A673 (cell line): ENCODE measurements at regions of chr3 and their contacts with region 1.

Region 1: DNA sequence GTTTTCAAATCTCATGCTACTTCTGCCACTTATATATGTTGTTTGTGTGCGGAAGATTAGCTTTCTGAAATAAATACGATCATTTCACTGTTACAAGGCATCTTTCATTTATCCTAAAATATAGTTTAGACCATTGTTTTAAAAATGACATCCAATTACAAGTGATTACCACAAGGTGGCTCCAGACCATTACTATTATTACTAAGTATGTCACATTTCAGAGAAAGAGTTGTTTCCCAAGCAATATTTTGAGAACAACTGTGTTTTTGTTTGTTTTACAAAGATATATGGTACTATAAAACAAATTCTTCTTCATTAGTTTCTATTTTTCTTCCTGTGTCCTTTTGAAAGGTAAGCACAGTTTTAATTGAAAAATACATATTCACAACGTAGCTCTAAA is 136.0 kb upstream of the RAP2B start:
- DNase-seq: peak; percentile 62
- H3K4me3 ChIP-seq: no peak overlapping the region
- H3K27ac ChIP-seq: no peak overlapping the region
- H3K4me1 ChIP-seq: peaks cover 19% of the 10 kb centered on the region
- H3K27me3 ChIP-seq: no peaks in the 10 kb centered on the region
- CTCF ChIP-seq: peak; percentile 78

Region 2: GRCh38 chr3:153595186-153595815 is 569.3 kb after region 1 on chr3:
- CTCF ChIA-PET with region 1: no interaction called
- POLR2A ChIA-PET with region 1: no interaction called
- intact Hi-C with region 1: loop called (anchors 2 kb)
- DNase-seq: peak; percentile 65
- H3K4me3 ChIP-seq: no peak overlapping the region
- H3K27ac ChIP-seq: no peak overlapping the region
- H3K4me1 ChIP-seq: peaks cover 7% of the 10 kb centered on the region
- H3K27me3 ChIP-seq: peaks cover 10% of the 10 kb centered on the region
- CTCF ChIP-seq: peak; percentile 63

Region 3: GRCh38 chr3:153768561-153769469 is 742.8 kb after region 1 on chr3:
- CTCF ChIA-PET with region 1: no interaction called
- POLR2A ChIA-PET with region 1: no interaction called
- intact Hi-C with region 1: loop called (anchors 2 kb)
- DNase-seq: peak; percentile 75
- H3K4me3 ChIP-seq: no peak overlapping the region
- H3K27ac ChIP-seq: no peak overlapping the region
- H3K4me1 ChIP-seq: no peaks in the 10 kb centered on the region
- H3K27me3 ChIP-seq: no peaks in the 10 kb centered on the region
- CTCF ChIP-seq: peak; percentile 84

Region 4: DNA sequence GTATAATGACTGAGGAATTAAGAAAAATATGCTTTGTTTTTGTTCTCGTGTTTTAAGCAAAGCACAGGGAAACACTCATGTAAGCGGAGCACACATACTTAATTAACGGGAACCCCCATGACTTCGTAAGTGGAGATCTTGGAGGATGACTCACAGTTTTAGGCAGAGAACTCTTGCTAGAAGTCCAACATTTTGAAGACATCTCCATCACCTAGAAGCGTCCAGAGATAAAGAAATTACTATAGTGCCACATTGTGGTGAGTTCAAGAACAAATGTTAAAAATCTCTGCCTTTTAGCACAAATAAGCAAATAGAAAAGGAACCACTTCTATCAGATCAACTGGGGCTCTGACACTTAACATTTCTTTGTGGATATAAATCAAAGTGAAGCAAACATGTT is 901.1 kb after region 1 on chr3:
- CTCF ChIA-PET with region 1: no interaction called
- POLR2A ChIA-PET with region 1: no interaction called
- intact Hi-C with region 1: loop called (anchors 2 kb)
- DNase-seq: peak; percentile 86
- H3K4me3 ChIP-seq: no peak overlapping the region
- H3K27ac ChIP-seq: no peak overlapping the region
- H3K4me1 ChIP-seq: no peaks in the 10 kb centered on the region
- H3K27me3 ChIP-seq: no peaks in the 10 kb centered on the region
- CTCF ChIP-seq: peak; percentile 55

Region 5: DNA sequence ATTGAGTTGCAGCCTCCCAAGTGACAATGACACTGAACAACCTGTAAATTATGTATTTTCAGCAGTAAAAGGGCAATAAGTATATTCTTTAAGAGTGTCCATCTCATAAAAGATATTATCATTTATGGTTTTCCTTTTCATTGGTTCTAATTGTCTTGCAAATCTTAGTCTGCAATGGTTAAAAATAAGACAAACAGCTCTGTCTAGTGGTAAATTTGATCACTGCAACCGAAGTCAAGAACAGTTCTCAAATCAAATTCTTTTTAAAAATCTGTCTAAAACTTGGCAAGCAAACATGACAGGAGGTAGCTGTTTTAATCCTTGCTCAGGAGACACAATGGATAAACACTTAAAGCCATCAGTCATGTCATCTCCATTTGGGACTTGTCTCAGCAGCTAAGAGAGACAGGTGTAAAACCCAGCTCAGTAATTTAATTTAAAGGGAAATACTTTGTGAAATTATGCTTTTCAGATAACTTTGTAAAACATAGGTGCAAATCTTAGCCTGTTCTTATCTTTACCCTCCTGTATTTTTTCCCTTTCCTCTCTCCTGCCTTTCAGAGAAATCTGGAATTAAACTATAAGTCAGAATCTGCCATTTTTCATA is 944.8 kb after region 1 on chr3:
- CTCF ChIA-PET with region 1: no interaction called
- POLR2A ChIA-PET with region 1: no interaction called
- intact Hi-C with region 1: loop called (anchors 5 kb)
- DNase-seq: peak; percentile 78
- H3K4me3 ChIP-seq: no peak overlapping the region
- H3K27ac ChIP-seq: no peak overlapping the region
- H3K4me1 ChIP-seq: peaks cover 46% of the 10 kb centered on the region
- H3K27me3 ChIP-seq: peaks cover 9% of the 10 kb centered on the region
- CTCF ChIP-seq: peak; percentile 78

Region 6: GRCh38 chr3:154018100-154018696 is 992.2 kb after region 1 on chr3:
- CTCF ChIA-PET with region 1: no interaction called
- POLR2A ChIA-PET with region 1: no interaction called
- intact Hi-C with region 1: loop called (anchors 5 kb)
- DNase-seq: peak; percentile 64
- H3K4me3 ChIP-seq: no peak overlapping the region
- H3K27ac ChIP-seq: no peak overlapping the region
- H3K4me1 ChIP-seq: no peaks in the 10 kb centered on the region
- H3K27me3 ChIP-seq: no peaks in the 10 kb centered on the region
- CTCF ChIP-seq: peak; percentile 74

Region 7: GRCh38 chr3:154252759-154253638 is 1227.0 kb after region 1 on chr3:
- CTCF ChIA-PET with region 1: no interaction called
- POLR2A ChIA-PET with region 1: no interaction called
- intact Hi-C with region 1: loop called (anchors 10 kb)
- DNase-seq: peak; percentile 87
- H3K4me3 ChIP-seq: no peak overlapping the region
- H3K27ac ChIP-seq: no peak overlapping the region
- H3K4me1 ChIP-seq: peaks cover 11% of the 10 kb centered on the region
- H3K27me3 ChIP-seq: no peaks in the 10 kb centered on the region
- CTCF ChIP-seq: peak; percentile 91